SK-N-SH (cell line): ENCODE measurements at regions of chr16 and their contacts with region 1.

Region 1: GRCh38 chr16:30984669-30985400 is at the start of gene HSD3B7:
- DNase-seq: peak; percentile 98
- H3K4me3 ChIP-seq: peak within 1 kb of the TSS; percentile 31 to 52; a peak in 3 of 4 replicates
- H3K27ac ChIP-seq: peak within 1 kb of the TSS; percentile 19 to 58; a peak in 1 of 4 replicates
- H3K4me1 ChIP-seq: peaks cover 5 to 8% of the 10 kb centered on the region in 2 experiments; a peak in 2 of 4 replicates
- H3K27me3 ChIP-seq: no peaks in the 10 kb centered on the region
- CTCF ChIP-seq: peak; percentile 86
- EP300 ChIP-seq: no peak; a peak in 1 of 4 replicates
- RAD21 ChIP-seq: peak; percentile 81
- polyA plus RNA-seq, gene HSD3B7: 12.2 and 12.9 TPM in 2 replicates

Region 2: DNA sequence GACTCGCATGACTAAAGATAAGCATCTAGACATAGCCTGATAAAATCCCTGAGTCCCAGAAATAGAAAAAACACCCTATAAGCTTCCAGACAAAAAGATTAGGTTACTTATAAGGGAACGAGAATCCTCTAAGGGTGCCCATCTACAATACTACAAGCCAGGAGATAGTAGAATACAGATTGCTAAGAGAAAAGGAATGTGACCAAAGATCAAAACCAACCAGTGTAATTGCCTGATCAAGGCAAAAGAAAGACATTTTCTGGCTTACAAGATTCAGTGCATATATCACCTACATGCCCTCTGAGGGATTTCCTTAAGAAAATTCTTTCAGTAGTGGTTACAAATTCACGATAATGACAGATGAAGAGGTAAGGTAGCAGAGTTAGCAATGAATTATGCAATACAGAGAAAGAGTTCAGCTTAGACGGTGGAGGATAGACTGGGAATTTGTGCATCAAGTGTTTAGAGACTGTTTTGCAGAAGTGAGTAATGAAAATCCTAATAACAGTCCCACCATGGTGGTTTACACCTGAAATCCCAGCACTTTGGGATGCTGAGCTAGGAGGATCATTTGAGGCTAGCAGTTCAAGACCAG is 125.9 kb before region 1 on chr16:
- CTCF ChIA-PET with region 1: no interaction called
- POLR2A ChIA-PET with region 1: no interaction called
- DNase-seq: no peak
- H3K4me3 ChIP-seq: no peak overlapping the region
- H3K27ac ChIP-seq: no peak overlapping the region
- H3K4me1 ChIP-seq: no peaks in the 10 kb centered on the region
- H3K27me3 ChIP-seq: no peaks in the 10 kb centered on the region
- CTCF ChIP-seq: no peak
- EP300 ChIP-seq: no peak
- RAD21 ChIP-seq: no peak

Region 3: GRCh38 chr16:30946671-30947540 is 37.9 kb before region 1 on chr16:
- CTCF ChIA-PET with region 1: no interaction called
- POLR2A ChIA-PET with region 1: no interaction called
- DNase-seq: no peak
- H3K4me3 ChIP-seq: no peak overlapping the region
- H3K27ac ChIP-seq: no peak overlapping the region
- H3K4me1 ChIP-seq: peaks cover 0 to 22% of the 10 kb centered on the region in 2 experiments; a peak in 1 of 4 replicates
- H3K27me3 ChIP-seq: no peaks in the 10 kb centered on the region
- CTCF ChIP-seq: no peak
- EP300 ChIP-seq: no peak
- RAD21 ChIP-seq: no peak

Region 4: DNA sequence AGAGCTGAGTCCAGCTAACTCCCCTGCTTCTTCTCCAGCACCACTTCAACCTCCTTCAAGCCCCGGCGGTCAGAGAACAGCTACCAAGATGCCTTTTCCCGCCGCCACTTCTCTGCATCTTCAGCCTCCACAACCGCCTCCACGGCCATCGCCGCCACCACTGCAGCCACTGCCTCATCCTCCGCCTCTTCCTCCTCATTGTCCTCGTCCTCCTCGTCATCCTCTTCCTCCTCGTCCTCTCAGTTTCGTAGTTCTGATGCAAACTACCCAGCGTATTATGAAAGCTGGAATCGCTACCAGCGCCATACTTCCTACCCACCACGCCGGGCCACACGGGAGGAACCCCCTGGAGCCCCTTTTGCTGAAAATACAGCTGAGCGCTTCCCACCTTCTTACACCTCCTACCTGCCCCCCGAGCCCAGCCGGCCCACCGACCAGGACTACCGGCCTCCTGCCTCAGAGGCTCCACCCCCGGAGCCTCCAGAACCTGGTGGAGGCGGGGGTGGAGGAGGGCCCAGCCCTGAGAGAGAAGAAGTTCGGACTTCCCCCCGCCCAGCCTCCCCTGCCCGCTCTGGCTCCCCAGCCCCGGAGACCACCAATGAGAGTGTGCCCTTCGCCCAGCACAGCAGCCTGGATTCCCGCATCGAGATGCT is 20.1 kb before region 1 on chr16:
- CTCF ChIA-PET with region 1: interaction called, 21 read pairs
- POLR2A ChIA-PET with region 1: interaction called, 4 read pairs
- DNase-seq: no peak
- H3K4me3 ChIP-seq: no peak overlapping the region
- H3K27ac ChIP-seq: no peak overlapping the region
- H3K4me1 ChIP-seq: no peaks in the 10 kb centered on the region
- H3K27me3 ChIP-seq: no peaks in the 10 kb centered on the region
- CTCF ChIP-seq: no peak
- EP300 ChIP-seq: no peak
- RAD21 ChIP-seq: no peak

Region 5: GRCh38 chr16:30997000-30997886 is 12.4 kb after region 1 on chr16:
- CTCF ChIA-PET with region 1: interaction called, 16 read pairs
- POLR2A ChIA-PET with region 1: interaction called, 5 read pairs
- DNase-seq: peak; percentile 97
- H3K4me3 ChIP-seq: peak overlapping the region in 1 of 2 experiments; percentile 25; a peak in 2 of 4 replicates
- H3K27ac ChIP-seq: peak overlapping the region; percentile 45 to 92; a peak in 3 of 4 replicates
- H3K4me1 ChIP-seq: peaks cover 14 to 18% of the 10 kb centered on the region in 2 experiments; a peak in 3 of 4 replicates
- H3K27me3 ChIP-seq: no peaks in the 10 kb centered on the region
- CTCF ChIP-seq: no peak
- EP300 ChIP-seq: no peak
- RAD21 ChIP-seq: no peak

Region 6: GRCh38 chr16:31016018-31016417 is 31.2 kb after region 1 on chr16:
- CTCF ChIA-PET with region 1: interaction called, 15 read pairs
- POLR2A ChIA-PET with region 1: no interaction called
- DNase-seq: peak; percentile 46
- H3K4me3 ChIP-seq: no peak overlapping the region
- H3K27ac ChIP-seq: no peak overlapping the region
- H3K4me1 ChIP-seq: peaks cover 0 to 5% of the 10 kb centered on the region in 2 experiments; a peak in 1 of 4 replicates
- H3K27me3 ChIP-seq: no peaks in the 10 kb centered on the region
- CTCF ChIP-seq: no peak
- EP300 ChIP-seq: no peak
- RAD21 ChIP-seq: peak; percentile 43